Aorta (tissue), 5 donors: ENCODE measurements at regions of chr20 and their contacts with region 1.

Region 1: GRCh38 chr20:51767010-51767558 is 1.1 kb downstream of the ATP9A start:
- DNase-seq: peak; percentile 73 to 89
- ATAC-seq: peak; percentile 82
- H3K4me3 ChIP-seq: peak overlapping the region; percentile 57 to 84
- H3K27ac ChIP-seq: no peak overlapping the region
- H3K4me1 ChIP-seq: no peaks in the 10 kb centered on the region
- H3K27me3 ChIP-seq: no peaks in the 10 kb centered on the region

Region 2: DNA sequence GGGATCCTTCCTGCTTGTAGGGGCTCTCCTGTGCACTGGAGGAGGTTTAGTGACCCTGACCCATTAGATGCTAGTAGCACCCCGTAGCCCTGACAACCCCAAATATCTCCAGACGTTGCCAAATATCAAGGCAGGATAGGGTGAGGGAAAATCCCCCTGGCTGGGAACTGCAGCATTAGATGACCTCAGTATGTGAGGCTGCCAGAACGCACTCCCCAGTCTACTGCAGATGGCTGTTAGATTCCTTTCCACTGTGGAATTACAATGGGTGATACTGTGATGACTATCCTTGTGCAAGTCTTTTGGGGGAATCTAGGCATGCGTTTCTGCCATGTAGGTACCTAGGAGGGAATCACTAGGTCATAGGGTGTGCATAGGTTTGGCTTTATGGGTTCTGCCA is 517.9 kb before region 1 on chr20:
- intact Hi-C with region 1: no loop called
- DNase-seq: no peak
- ATAC-seq: no peak
- H3K4me3 ChIP-seq: no peak overlapping the region
- H3K27ac ChIP-seq: no peak overlapping the region
- H3K4me1 ChIP-seq: no peaks in the 10 kb centered on the region
- H3K27me3 ChIP-seq: no peaks in the 10 kb centered on the region

Region 3: DNA sequence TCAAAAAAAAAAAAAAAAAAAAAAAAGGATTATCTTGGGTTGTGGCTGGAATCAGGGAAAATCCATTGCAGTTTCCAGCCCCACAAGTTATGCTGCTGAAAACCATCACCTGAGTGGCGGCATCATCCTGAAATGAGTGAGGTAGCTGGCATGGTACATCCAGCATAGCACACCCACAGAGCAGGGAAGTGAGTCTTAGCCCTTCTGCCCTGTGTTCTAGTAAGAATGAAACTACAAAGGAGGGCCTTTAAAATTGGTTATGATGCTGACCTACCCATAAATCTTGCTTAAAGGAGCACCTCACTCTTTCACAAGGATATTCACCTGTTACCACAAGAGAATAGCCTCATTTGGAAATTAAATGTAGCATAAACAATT is 343.8 kb before region 1 on chr20:
- intact Hi-C with region 1: no loop called
- DNase-seq: no peak
- ATAC-seq: no peak
- H3K4me3 ChIP-seq: no peak overlapping the region
- H3K27ac ChIP-seq: no peak overlapping the region
- H3K4me1 ChIP-seq: no peaks in the 10 kb centered on the region
- H3K27me3 ChIP-seq: no peaks in the 10 kb centered on the region

Region 4: DNA sequence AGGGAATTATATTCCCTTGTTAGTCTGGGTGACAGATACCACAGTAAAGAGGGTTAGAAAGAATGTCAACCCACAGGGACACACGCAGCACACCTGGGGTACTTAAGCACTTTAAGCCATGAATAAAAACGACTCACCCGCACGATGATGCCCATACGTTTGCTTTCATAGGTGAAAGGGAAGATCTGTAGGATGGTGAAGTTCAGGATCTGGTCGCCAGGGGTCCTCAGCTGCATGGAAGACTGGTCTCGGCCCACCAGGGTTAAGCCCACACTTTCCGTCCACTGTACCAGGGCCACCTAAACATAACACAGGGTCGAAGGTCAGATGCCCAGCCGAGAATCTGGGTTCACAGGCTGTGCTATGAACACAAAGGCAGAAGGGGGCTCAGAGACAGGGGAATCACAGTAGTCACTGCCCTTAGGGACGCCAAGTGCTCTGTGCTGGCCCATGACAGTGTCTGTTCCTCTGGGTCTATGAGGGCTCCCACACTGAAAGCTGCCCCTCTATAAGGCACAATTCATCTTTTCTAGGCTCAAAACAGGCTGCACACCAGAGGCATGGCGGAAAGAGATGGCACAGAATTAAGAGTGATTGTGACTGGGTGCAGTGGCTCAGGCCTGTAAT is 127.8 kb before region 1 on chr20:
- intact Hi-C with region 1: loop called in 1 of 2 experiments (anchors 10 kb)
- DNase-seq: peak; percentile 73 to 89
- ATAC-seq: peak; percentile 68
- H3K4me3 ChIP-seq: no peak overlapping the region
- H3K27ac ChIP-seq: no peak overlapping the region
- H3K4me1 ChIP-seq: no peaks in the 10 kb centered on the region
- H3K27me3 ChIP-seq: no peaks in the 10 kb centered on the region

Region 5: DNA sequence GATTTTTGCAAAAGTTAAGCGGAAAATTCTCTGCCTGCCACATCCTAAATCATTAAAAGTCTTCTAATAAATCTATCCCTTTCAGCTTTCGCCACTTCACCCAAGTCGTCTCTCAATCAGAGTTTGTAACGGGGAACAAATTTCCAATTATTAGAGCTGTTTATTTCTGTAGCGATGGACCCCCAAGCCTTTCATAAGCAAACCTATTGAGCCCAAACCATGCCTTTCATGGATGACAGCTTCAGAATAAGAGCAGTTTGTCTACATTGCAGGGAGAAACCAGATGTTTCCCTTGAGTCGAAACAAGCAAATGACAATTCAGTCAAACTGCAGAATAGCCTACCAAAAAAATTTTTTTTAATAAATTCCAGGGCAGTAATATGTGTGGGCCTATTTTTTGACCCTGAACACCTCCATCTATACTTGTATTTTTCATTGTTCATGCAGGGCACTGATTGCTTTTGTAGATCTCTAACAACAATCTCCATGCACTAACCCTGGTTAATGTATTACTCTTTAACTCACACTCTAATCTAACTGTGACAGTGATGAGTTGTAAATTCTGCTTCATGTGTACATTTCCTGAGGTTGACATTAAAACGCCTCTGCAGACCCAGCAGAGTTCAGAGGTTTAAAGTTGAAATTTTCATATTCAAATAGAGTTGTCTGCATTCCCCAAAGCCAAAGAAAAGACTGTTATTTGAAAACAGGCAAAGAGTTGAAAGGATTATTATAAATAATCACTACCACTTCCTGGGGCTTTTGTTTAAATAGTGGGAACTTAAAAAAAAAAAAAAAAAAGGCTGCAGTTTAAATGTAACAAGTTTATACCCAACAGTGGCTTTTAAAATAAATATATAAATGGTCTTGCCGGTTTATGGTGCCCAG is 63.4 kb before region 1 on chr20:
- intact Hi-C with region 1: loop called in 1 of 2 experiments (anchors 10 kb)
- DNase-seq: no peak
- ATAC-seq: no peak
- H3K4me3 ChIP-seq: no peak overlapping the region
- H3K27ac ChIP-seq: no peak overlapping the region
- H3K4me1 ChIP-seq: no peaks in the 10 kb centered on the region
- H3K27me3 ChIP-seq: no peaks in the 10 kb centered on the region

Region 6: DNA sequence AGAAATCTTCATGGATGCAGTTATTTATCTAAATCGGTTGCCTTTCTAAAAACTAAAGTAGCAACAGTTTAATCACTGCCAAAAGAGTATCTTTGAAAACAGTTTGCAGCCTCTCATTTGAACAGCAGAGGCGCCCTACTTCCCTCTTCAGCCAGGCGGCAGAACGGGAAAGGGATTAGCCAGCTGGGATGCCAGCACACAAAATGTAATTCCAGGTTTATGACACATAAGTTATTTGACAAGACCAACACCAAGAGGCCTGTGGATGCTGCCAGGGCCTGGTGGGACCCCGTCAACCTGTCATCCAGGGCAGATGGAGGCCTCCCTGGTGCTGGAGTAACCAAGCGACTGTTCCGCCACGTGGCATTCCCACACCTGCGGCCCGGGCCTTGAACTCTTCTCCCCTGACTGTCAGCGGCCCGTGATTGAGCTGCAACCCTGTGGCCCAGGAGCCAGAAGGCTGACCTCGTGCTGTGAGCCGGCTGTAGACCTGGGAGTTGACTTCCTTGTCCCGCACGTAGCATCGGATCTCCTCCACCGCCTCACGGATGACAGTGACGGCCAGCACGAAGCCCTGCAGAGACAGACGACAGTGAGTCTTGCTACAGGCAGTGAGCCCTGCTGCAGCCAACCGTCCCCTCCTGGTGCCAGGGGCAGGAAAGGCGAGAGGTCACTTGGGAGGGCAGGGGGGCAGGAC is 54.4 kb before region 1 on chr20:
- intact Hi-C with region 1: loop called (anchors 10 kb)
- DNase-seq: no peak
- ATAC-seq: no peak
- H3K4me3 ChIP-seq: no peak overlapping the region
- H3K27ac ChIP-seq: no peak overlapping the region
- H3K4me1 ChIP-seq: no peaks in the 10 kb centered on the region
- H3K27me3 ChIP-seq: no peaks in the 10 kb centered on the region

Region 7: DNA sequence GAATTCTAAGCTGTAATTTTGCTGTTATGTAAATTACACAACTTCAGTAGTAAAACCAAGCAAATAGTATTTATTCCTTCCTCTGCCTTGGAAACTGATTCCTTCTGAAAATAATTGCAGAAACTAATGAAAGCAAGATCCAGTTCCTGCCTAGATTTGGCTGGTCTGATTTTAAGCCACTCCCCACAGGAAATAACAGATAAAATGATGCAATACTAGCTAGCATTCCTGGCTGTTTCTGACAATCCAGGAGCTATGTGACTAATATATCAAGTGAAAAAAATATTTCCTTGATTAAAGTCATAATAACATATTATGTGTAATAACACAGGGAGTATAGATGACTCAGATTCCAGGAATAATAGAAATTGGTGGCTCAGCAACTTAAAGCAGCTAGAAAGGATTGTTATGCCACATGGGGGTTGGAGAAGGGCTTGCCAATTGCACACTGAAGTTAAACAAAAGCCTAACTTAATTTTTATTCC is 217.9 kb after region 1 on chr20:
- intact Hi-C with region 1: loop called in 1 of 2 experiments (anchors 10 kb)
- DNase-seq: no peak
- ATAC-seq: peak; percentile 88
- H3K4me3 ChIP-seq: no peak overlapping the region
- H3K27ac ChIP-seq: no peak overlapping the region
- H3K4me1 ChIP-seq: no peaks in the 10 kb centered on the region
- H3K27me3 ChIP-seq: no peaks in the 10 kb centered on the region